ENCODE measurements at regions of chr9 and their contacts with region 1.

Region 1: GRCh38 chr9:128034821-128035764 is 32.0 kb downstream of the NAIF1 start:
- DNase-seq: peak; percentile 77 to 85
- H3K4me3 ChIP-seq: no peak overlapping the region
- H3K27ac ChIP-seq: no peak overlapping the region
- H3K4me1 ChIP-seq: peaks cover 18% of the 10 kb centered on the region
- H3K27me3 ChIP-seq: no peaks in the 10 kb centered on the region
- CTCF ChIP-seq: peak; percentile 94

Region 2: DNA sequence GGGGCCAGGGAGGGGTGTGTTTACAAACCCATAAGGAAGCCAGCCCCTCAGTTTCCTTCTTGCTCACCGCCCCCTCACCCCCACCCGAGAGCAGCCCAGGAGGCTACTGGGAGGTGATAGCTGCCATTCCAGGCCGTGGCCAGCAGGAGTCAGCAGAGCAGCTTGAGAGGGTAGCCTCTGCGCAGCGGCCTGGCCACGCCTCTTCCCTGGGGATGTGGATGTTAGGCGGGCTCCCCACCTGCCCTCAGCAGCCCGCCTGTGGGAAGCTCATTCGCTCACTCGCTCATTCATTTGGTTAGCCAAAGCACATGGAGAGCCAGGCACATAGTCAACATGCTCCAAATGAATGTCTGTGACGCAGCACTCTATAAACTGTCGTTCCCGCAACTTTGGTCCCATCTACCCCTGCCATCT is 91.4 kb before region 1 on chr9:
- CTCF ChIA-PET with region 1: interaction called, 23 read pairs
- POLR2A ChIA-PET with region 1: interaction called, 9 read pairs
- intact Hi-C with region 1: loop called (anchors 1 kb)
- DNase-seq: peak; percentile 61 to 80
- H3K4me3 ChIP-seq: no peak overlapping the region
- H3K27ac ChIP-seq: no peak overlapping the region
- H3K4me1 ChIP-seq: no peaks in the 10 kb centered on the region
- H3K27me3 ChIP-seq: no peaks in the 10 kb centered on the region
- CTCF ChIP-seq: peak; percentile 88

Region 3: GRCh38 chr9:127968717-127969383 is 66.2 kb before region 1 on chr9:
- CTCF ChIA-PET with region 1: interaction called, 3 read pairs
- POLR2A ChIA-PET with region 1: interaction called, 11 read pairs
- intact Hi-C with region 1: loop called (anchors 1 kb)
- DNase-seq: peak; percentile 66 to 72
- H3K4me3 ChIP-seq: no peak overlapping the region
- H3K27ac ChIP-seq: peak overlapping the region; percentile 81
- H3K4me1 ChIP-seq: peaks cover 96% of the 10 kb centered on the region
- H3K27me3 ChIP-seq: no peaks in the 10 kb centered on the region
- CTCF ChIP-seq: no peak

Region 4: DNA sequence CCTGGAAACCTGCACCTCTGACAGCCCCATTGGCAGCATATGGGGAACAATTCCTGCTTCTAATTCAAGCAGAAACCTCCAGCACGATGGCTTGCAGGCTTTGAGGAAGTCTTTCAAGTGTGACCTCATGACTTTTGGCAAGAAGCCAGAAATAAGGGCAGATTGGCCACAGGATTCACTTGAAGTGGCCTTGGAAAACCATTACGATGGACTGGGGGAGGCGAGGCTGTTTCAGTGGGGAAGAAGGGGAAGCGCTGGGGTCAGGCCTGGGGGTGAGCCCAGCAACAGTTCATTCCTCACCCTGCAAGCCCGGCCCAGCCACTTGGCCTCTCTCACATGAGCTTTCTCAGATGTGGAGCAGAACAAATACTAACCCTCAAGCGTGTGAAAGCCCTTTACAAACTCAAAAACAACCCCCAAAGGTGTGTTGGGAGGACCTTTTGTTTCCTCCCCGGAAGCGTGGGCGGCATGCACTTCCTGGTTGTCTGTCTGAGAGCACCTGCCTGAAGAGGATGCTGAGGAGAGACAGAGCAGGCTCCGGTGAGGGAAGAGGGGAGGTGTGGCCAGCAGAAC is 27.4 kb before region 1 on chr9:
- CTCF ChIA-PET with region 1: no interaction called
- POLR2A ChIA-PET with region 1: no interaction called
- intact Hi-C with region 1: loop called (anchors 2 kb)
- DNase-seq: peak; percentile 82 to 98
- H3K4me3 ChIP-seq: no peak overlapping the region
- H3K27ac ChIP-seq: peak overlapping the region; percentile 96
- H3K4me1 ChIP-seq: peaks cover 57% of the 10 kb centered on the region
- H3K27me3 ChIP-seq: no peaks in the 10 kb centered on the region
- CTCF ChIP-seq: no peak

Region 5: DNA sequence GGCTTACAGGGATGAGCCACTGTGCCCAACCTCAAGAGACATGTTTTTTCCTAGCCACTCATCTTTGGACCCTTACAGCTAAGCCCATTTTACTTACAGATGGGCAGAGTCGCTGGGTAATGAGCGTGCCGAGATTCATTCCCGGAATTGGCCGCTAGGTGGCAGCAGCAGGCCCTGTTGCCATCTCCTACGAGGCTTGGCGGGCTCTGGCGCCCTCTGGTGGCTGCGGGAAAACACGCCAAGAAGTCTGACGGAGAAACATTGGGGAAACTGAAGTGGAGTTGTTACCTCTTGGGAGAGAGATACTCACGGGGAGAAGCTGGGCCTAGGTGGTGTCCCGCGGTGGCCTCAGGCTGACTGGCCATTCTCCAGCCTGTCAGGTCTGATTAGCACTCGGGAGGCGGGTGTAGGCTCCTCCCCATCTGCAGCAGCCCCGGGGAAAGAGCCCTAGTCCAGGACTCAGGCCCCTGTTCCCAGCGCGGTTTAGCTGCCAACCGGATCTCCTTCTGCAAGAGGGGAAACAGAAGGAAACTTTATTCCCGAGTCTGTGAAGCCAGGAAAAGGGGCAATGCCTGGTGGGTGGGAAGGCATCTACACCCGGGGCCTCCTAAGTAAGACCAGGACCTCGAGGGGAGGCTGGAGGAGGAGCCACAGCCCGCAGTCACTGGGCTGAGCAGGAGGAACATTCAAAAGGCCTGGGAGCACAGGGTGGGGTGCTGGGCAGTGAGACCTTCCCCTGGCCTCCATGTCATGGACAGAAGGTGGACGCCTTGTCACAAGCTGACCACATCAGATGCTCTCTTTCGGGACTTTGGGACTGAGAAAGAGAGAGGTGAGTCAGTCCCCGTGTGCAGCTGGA is 82.7 kb after region 1 on chr9:
- CTCF ChIA-PET with region 1: no interaction called
- POLR2A ChIA-PET with region 1: no interaction called
- intact Hi-C with region 1: loop called (anchors 1 kb)
- DNase-seq: peak; percentile 75 to 93
- H3K4me3 ChIP-seq: no peak overlapping the region
- H3K27ac ChIP-seq: no peak overlapping the region
- H3K4me1 ChIP-seq: no peaks in the 10 kb centered on the region
- H3K27me3 ChIP-seq: no peaks in the 10 kb centered on the region
- CTCF ChIP-seq: peak; percentile 100